ENCODE measurements at regions of chr5 and their contacts with region 1.

Region 1: DNA sequence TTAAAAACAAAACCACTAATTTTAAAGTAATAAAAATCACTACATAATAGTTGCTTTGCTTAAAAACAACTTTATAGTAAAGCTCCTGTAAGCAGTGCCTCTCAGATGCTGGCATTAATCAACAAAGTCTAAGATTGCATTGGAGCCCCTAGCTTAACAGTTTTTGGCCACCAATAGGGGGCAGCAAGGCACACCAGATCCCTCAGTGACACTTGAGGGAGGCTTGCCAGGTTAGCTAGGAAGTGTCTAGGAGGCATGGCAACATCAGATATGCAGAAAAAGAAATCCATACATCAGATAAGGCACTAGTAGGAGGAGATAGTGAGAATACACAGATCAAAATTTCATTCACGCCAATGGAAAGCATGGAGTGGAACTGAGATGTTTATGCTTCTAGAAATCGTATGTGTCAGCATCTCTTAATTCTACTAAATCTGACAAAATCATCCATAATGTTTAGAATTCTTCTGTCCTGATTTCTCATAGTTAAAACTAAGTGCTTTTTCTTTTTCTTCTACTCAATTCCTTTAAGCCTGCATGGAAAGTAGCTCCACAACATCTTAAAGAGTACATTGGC is 73.6 kb upstream of the PAM start:
- DNase-seq: peak in 1 of 2 donors; percentile 79
- H3K4me3 ChIP-seq: no peak overlapping the region
- H3K27ac ChIP-seq: no peak overlapping the region
- H3K4me1 ChIP-seq: peaks cover 0 to 2% of the 10 kb centered on the region in 2 donors
- H3K27me3 ChIP-seq: no peaks in the 10 kb centered on the region
- CTCF ChIP-seq: peak; percentile 57 to 75 (median 68)

Region 2: GRCh38 chr5:102583276-102584124 is 98.0 kb before region 1 on chr5:
- intact Hi-C with region 1: loop called (anchors 5 kb)
- DNase-seq: no peak
- H3K4me3 ChIP-seq: no peak overlapping the region
- H3K27ac ChIP-seq: no peak overlapping the region
- H3K4me1 ChIP-seq: peaks cover 0 to 3% of the 10 kb centered on the region in 2 donors
- H3K27me3 ChIP-seq: no peaks in the 10 kb centered on the region
- CTCF ChIP-seq: peak; percentile 15 to 58 (median 42)

Region 3: GRCh38 chr5:102715082-102715819 is 33.8 kb after region 1 on chr5:
- intact Hi-C with region 1: no loop called
- DNase-seq: no peak
- H3K4me3 ChIP-seq: no peak overlapping the region
- H3K27ac ChIP-seq: no peak overlapping the region
- H3K4me1 ChIP-seq: no peaks in the 10 kb centered on the region
- H3K27me3 ChIP-seq: no peaks in the 10 kb centered on the region
- CTCF ChIP-seq: no peak

Region 4: DNA sequence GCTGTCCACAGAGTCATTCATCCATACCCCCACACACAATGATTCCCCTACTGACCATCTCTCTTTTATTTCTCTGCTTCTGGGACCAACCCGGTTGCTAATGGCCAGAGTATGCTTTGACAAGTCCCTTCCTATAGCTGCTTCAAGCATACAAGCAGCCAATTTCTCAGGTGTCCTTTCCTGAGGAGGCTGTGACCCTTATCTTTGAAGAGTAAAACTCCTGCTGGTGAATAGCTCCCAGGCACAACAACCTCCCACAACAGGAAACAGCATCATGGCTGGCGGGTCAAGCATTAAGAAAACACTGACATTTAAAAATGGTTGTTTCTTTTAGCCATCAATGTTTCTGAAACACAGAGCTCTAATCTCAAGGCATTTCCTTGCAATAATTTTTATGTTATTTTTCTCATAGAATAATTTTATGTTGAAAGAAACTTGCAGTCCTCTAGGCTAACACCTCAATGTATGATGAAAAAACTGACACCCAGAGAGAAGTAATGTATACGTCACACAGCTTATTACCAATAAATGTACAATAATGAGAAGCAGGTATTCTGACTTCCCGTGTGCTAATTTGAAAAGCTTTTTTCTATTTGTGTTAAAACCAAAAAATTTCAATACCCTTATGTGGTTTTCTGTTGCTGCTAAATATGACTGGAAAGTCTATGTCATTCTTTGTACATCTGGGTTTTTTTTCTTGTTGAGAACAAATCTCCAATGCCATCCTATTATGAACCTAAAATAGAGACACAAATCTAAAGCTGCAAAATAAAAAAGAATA is 66.1 kb after region 1 on chr5:
- intact Hi-C with region 1: no loop called
- DNase-seq: no peak
- H3K4me3 ChIP-seq: no peak overlapping the region
- H3K27ac ChIP-seq: no peak overlapping the region
- H3K4me1 ChIP-seq: no peaks in the 10 kb centered on the region
- H3K27me3 ChIP-seq: no peaks in the 10 kb centered on the region
- CTCF ChIP-seq: no peak

Region 5: GRCh38 chr5:102971697-102972293 is 290.3 kb after region 1 on chr5:
- intact Hi-C with region 1: loop called (anchors 5 kb)
- DNase-seq: no peak
- H3K4me3 ChIP-seq: no peak overlapping the region
- H3K27ac ChIP-seq: peak overlapping the region in 1 of 2 donors; percentile 13
- H3K4me1 ChIP-seq: peaks cover 4 to 8% of the 10 kb centered on the region in 2 donors
- H3K27me3 ChIP-seq: no peaks in the 10 kb centered on the region
- CTCF ChIP-seq: peak in 2 of 3 experiments; percentile 26 to 46

Region 6: DNA sequence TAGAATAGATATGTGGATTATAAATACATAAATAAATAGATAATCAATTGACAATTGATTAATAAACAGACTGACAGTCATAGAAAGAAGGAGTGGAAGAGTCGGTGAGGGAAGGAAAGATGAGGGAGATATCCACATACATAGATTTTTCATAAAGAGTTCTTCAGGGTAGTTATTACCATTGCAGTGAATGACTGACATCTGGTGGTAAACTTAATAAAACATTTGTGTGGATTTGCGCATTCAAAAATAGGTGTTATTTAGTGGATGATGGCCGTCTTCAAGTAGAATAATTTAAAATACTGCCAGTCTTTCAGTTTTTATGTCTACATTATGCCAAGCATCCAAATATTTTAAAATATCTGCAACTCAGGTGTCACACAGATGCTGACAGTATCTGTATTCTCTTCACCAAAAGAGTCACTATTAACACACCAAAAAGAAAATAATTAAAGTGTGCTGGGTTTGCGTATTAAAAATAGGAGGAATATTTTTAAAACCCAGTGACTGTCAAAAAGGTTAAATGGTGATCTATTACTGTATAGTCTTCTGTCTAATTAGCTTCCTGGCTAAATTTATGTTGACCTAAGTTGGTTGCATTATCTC is 359.7 kb after region 1 on chr5:
- intact Hi-C with region 1: loop called (anchors 1 kb)
- DNase-seq: no peak
- H3K4me3 ChIP-seq: peak overlapping the region in 1 of 2 donors; percentile 20
- H3K27ac ChIP-seq: no peak overlapping the region
- H3K4me1 ChIP-seq: no peaks in the 10 kb centered on the region
- H3K27me3 ChIP-seq: no peaks in the 10 kb centered on the region
- CTCF ChIP-seq: peak; percentile 36 to 71 (median 68)